AG04450 (cell line): ENCODE measurements at regions of chrX and their contacts with region 1.

Region 1: GRCh38 chrX:110407910-110408545 is 49.4 kb downstream of the RTL9 start:
- DNase-seq: no peak
- H3K4me3 ChIP-seq: no peak overlapping the region
- H3K27ac ChIP-seq: no peak overlapping the region
- H3K27me3 ChIP-seq: no peaks in the 10 kb centered on the region
- CTCF ChIP-seq: peak; percentile 69

Region 2: GRCh38 chrX:110146521-110146920 is 261.5 kb before region 1 on chrX:
- CTCF ChIA-PET with region 1: interaction called, 464 read pairs
- POLR2A ChIA-PET with region 1: no interaction called
- DNase-seq: no peak
- H3K4me3 ChIP-seq: no peak overlapping the region
- H3K27ac ChIP-seq: no peak overlapping the region
- H3K27me3 ChIP-seq: no peaks in the 10 kb centered on the region
- CTCF ChIP-seq: peak; percentile 71

Region 3: GRCh38 chrX:110180176-110180927 is 227.7 kb before region 1 on chrX:
- CTCF ChIA-PET with region 1: interaction called, 10 read pairs
- POLR2A ChIA-PET with region 1: no interaction called
- DNase-seq: peak; percentile 38
- H3K4me3 ChIP-seq: no peak overlapping the region
- H3K27ac ChIP-seq: peak overlapping the region; percentile 65
- H3K27me3 ChIP-seq: no peaks in the 10 kb centered on the region
- CTCF ChIP-seq: no peak

Region 4: GRCh38 chrX:110188756-110189558 is 219.1 kb before region 1 on chrX:
- CTCF ChIA-PET with region 1: interaction called, 11 read pairs
- POLR2A ChIA-PET with region 1: no interaction called
- DNase-seq: no peak
- H3K4me3 ChIP-seq: no peak overlapping the region
- H3K27ac ChIP-seq: peak overlapping the region; percentile 39
- H3K27me3 ChIP-seq: no peaks in the 10 kb centered on the region
- CTCF ChIP-seq: no peak

Region 5: DNA sequence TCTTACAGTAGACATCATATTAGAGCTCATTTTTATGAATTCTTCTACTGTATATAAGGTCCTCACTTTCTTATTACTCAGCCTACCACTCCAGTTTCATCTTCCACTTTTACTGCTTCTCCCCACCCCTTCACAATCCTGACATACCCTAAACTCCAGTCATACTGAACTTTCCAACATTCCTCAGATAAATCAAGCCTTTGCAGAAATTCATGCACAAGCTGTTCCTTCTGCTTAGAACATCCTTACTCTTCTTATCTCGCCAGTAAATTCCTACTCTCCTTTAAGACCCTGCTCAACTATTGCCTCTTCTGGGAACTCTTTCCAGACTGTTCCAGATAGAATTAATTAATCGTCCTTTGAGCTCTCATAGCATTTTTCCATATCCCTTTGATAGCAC is 24.6 kb before region 1 on chrX:
- CTCF ChIA-PET with region 1: interaction called, 17 read pairs
- POLR2A ChIA-PET with region 1: no interaction called
- DNase-seq: peak; percentile 59
- H3K4me3 ChIP-seq: no peak overlapping the region
- H3K27ac ChIP-seq: peak overlapping the region; percentile 83
- H3K27me3 ChIP-seq: no peaks in the 10 kb centered on the region
- CTCF ChIP-seq: no peak

Region 6: GRCh38 chrX:110394671-110395070 is 13.4 kb before region 1 on chrX:
- CTCF ChIA-PET with region 1: interaction called, 12 read pairs
- POLR2A ChIA-PET with region 1: no interaction called
- DNase-seq: no peak
- H3K4me3 ChIP-seq: no peak overlapping the region
- H3K27ac ChIP-seq: peak overlapping the region; percentile 52
- H3K27me3 ChIP-seq: no peaks in the 10 kb centered on the region
- CTCF ChIP-seq: no peak

Region 7: DNA sequence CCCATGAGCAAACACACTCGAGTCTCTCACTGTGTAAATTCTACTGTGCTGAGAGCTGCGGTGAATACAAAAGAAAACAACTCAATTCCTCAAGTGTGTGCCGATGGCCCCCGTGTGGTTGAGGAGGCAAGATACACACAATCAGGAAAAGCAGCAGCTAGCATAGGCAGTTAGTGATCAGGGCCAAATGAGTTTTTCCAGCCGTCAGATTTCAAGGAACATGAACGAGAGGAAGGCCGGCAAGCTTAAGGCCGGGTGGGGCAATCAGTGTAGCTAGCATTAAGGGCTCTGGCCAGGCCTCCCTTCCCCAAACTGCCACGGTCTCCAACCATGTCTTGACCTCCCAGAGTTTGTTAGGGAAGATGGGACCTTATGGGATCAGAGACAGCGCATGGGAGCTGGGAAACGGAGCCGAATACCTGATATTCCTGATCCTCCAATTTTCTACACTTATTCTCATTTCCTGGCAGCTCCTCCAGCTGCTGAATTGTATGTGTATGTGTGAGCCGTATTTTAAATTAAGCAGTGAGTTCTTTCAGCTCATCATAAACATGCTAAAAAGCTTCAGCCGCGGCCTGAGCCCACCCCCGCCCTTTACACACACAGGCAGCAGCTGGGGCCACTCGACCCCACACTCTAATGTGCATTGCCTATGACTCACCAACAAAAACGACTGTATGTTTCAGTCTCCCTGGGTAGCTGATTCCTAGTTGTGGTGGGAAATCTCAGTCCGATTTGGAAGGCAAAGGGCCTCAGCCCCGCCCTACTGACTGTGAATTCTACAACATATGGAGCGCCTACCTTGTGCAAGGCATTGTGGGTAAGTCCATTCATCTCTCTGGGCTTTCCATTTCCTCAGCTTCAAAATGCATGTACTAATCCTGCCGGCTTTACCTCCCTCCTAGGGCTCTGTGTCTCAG is 10.5 kb after region 1 on chrX:
- CTCF ChIA-PET with region 1: interaction called, 32 read pairs
- POLR2A ChIA-PET with region 1: interaction called, 4 read pairs
- DNase-seq: peak; percentile 66
- H3K4me3 ChIP-seq: peak overlapping the region; percentile 24
- H3K27ac ChIP-seq: peak overlapping the region; percentile 74
- H3K27me3 ChIP-seq: no peaks in the 10 kb centered on the region
- CTCF ChIP-seq: peak; percentile 66